Activated T-helper 2 cell treated with anti-CD3 and anti-CD28 coated beads, Interferon-gamma antibody, Interleukin-2, Interleukin-4, amounts not matched to agents 10 μg/mL and 5 μg/mL and 100 μg/mL, durations not matched to agents 14 hours and 24 hours and 36 hours (primary cell): ENCODE measurements at regions of chr4 and their contacts with region 1.

Region 1: DNA sequence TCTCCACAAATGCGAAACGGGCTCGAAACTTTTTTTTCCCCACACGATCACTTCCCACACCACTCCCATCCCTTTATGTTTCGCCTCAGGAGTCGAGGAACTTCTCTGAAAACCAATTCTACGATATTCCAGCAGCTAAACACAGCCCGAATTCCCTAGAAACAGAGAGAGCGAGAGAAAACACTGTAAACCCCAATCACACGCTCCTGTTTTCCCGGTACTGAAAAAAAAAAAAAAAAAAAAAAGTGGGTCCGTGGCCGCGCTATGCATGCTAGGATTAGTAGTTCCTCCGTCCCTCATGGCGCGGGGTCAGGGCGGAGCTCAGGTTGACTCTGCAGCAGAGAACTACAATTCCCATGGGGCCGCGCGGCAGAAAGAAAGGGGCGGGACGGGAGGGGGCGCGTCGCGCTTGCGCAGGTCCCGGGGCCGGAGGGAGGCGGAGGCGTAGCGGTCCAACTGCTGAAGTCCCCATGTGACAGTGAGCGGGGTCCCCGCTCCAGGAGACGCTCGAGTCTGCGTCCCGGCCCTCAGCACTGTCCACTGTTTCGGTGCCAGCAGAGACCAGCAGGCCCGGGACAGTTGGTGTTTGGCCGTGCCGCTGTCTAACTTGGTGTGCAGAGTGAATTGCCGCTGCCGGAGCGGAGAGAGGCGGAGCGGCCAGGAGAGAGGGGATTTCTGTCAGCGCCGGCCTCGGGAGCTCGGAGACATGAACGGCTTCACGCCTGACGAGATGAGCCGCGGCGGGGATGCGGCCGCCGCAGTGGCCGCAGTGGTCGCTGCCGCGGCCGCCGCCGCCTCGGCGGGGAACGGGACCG is at the start of gene SAP30:
- DNase-seq: peak; percentile 93
- H3K4me3 Mint-ChIP-seq: peak within 1 kb of the TSS; percentile 100
- H3K27ac Mint-ChIP-seq: peak within 1 kb of the TSS; percentile 99
- H3K4me1 Mint-ChIP-seq: peaks cover 40% of the 10 kb centered on the region
- H3K27me3 Mint-ChIP-seq: no peaks in the 10 kb centered on the region
- total RNA-seq, gene SAP30: 37.4 and 38.3 TPM in 2 replicates

Region 2: GRCh38 chr4:173168396-173169177 is 202.1 kb before region 1 on chr4 and contains the start of gene GALNT7:
- intact Hi-C with region 1: loop called (anchors 1 kb)
- DNase-seq: peak; percentile 45
- H3K4me3 Mint-ChIP-seq: peak within 1 kb of the TSS; percentile 98
- H3K27ac Mint-ChIP-seq: peak within 1 kb of the TSS; percentile 95
- H3K4me1 Mint-ChIP-seq: peaks cover 43% of the 10 kb centered on the region
- H3K27me3 Mint-ChIP-seq: no peaks in the 10 kb centered on the region
- total RNA-seq, gene GALNT7: 28.9 and 33.1 TPM in 2 replicates

Region 3: DNA sequence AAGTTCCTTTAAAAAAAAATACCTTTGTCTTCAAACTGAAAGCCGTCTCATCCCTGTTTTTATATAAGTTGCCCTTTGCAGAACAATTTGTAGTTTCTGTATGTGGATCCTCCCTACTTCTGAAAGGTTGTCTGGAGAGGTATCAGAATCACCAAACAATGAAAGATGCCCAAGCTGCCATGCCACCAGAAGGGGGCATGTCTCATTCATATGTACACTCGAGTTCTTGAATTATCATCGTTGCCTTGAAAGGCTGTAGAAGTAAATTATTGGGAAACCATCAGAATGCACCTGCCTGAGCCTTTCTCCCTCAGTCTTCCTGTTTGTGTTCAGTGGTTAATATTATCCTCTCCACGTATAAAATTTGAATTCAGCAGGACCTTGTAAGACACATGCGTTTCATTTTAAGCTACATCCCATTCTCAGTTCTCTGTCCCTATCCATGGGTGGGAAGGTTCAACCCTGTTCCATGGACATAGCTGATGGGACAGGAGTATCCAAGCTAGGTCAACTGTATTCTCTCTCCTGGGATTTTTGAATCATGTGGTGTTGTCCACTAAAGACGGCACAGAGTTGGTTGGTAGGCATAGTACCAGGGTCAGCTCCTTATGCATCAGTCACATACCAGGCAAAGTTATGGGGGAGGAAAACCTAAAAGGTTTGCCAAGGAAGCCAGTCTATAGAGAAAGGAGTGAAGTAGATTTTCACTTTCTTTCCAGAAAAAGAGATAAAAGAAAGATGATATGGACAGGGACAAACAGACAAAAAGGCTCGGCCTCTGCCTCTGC is 178.1 kb before region 1 on chr4:
- intact Hi-C with region 1: loop called (anchors 5 kb)
- DNase-seq: no peak
- H3K4me3 Mint-ChIP-seq: no peak overlapping the region
- H3K27ac Mint-ChIP-seq: peak overlapping the region; percentile 78
- H3K4me1 Mint-ChIP-seq: peaks cover 37% of the 10 kb centered on the region
- H3K27me3 Mint-ChIP-seq: no peaks in the 10 kb centered on the region

Region 4: DNA sequence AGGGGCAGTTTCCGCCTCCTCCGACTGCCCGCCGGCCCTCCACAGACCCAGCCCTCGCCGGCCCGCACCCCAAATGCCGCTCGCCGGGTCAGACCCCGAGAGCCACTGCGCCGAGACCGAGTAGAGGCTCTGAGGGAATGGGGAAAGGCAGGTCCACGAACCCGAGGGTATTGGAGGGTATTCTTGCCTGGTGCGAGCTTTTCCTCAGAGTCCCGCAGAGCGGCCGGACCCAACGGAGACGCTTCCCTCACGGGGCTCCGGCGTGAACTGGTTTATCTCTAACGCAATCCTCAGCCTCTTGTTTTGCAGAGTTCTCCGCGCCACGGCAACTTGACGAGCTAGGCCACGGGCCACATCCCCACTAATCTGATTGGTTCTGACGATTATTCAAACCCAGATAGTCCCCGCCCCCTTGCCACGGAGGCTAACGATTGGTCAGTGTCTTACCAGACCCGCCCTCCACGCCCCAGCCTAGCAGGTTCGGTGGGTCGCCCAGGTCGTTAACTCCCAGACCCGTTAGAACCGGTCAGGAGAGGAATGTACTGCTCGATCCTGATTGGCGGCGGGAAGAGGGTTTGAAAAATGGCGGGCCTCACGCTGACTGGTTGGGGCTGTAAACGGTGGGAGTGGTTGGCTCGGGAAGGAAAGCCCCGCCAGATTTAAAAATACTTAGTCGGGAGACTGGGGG is 36.5 kb before region 1 on chr4 and contains the start of gene HMGB2:
- intact Hi-C with region 1: loop called (anchors 1 kb)
- DNase-seq: peak; percentile 100
- H3K4me3 Mint-ChIP-seq: peak within 1 kb of the TSS; percentile 97
- H3K27ac Mint-ChIP-seq: peak within 1 kb of the TSS; percentile 99
- H3K4me1 Mint-ChIP-seq: peaks cover 44% of the 10 kb centered on the region
- H3K27me3 Mint-ChIP-seq: no peaks in the 10 kb centered on the region
- total RNA-seq, gene HMGB2: 380 and 393 TPM in 2 replicates

Region 5: GRCh38 chr4:173420324-173420752 is 49.7 kb after region 1 on chr4:
- intact Hi-C with region 1: loop called (anchors 2 kb)
- DNase-seq: no peak
- H3K4me3 Mint-ChIP-seq: no peak overlapping the region
- H3K27ac Mint-ChIP-seq: no peak overlapping the region
- H3K4me1 Mint-ChIP-seq: peaks cover 4% of the 10 kb centered on the region
- H3K27me3 Mint-ChIP-seq: peaks cover 2% of the 10 kb centered on the region

Region 6: GRCh38 chr4:173494013-173494970 is 123.6 kb after region 1 on chr4:
- intact Hi-C with region 1: loop called (anchors 5 kb)
- DNase-seq: peak; percentile 53
- H3K4me3 Mint-ChIP-seq: peak overlapping the region; percentile 81
- H3K27ac Mint-ChIP-seq: no peak overlapping the region
- H3K4me1 Mint-ChIP-seq: peaks cover 18% of the 10 kb centered on the region
- H3K27me3 Mint-ChIP-seq: peaks cover 29% of the 10 kb centered on the region

Region 7: GRCh38 chr4:174282836-174283506 is 912.3 kb after region 1 on chr4:
- intact Hi-C with region 1: loop called (anchors 2 kb)
- DNase-seq: peak; percentile 79
- H3K4me3 Mint-ChIP-seq: peak overlapping the region; percentile 98
- H3K27ac Mint-ChIP-seq: peak overlapping the region; percentile 99
- H3K4me1 Mint-ChIP-seq: peaks cover 52% of the 10 kb centered on the region
- H3K27me3 Mint-ChIP-seq: no peaks in the 10 kb centered on the region